ENCODE measurements at regions of chr2 and their contacts with region 1.

Region 1: DNA sequence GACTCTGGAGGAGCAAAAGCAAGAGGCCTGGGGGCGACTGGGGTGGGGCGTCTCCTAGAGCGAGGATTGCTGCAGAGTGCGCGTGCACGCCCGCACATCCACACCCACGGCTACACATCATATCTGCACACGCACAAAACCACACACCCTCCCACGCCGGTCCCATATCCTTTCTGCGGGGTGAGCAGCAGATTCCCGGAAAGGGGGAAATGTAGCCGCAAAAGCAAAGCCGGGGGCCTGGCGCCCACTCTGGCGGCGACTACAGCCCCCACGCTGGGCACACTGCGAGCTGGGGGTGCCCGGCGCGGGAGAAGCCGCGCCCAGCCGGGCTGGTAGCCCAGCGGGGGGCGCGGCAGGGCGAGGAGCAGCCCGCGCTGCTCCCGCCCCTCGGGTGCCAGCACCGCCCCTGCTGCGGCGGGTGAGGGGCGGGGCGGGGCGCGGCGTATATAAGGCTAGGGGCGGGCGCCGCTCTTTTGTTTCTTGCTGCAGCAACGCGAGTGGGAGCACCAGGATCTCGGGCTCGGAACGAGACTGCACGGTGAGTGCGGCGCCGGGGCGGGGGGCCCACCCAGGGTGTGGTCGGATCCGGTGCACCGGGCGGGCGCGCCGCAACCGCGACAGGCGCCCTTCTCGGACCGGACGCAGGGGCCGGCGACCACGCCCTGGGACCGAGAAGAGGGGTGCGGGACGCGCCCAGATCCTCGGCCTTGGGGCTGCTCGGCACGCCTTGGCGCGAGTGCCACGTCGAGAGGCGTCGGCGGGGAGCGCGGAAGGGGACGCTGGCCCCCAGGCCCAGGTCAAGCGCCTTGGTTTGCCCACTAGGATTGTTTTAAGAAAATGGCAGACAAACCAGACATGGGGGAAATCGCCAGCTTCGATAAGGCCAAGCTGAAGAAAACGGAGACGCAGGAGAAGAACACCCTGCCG is at the start of gene TMSB10:
- DNase-seq: no peak
- ATAC-seq: peak; percentile 81
- H3K4me3 ChIP-seq: peak within 1 kb of the TSS; percentile 99
- H3K27ac ChIP-seq: peak within 1 kb of the TSS; percentile 62
- H3K4me1 ChIP-seq: peaks cover 24% of the 10 kb centered on the region
- H3K27me3 ChIP-seq: no peaks in the 10 kb centered on the region
- CTCF ChIP-seq: peak in 2 of 3 experiments; percentile 25 to 33; a peak in 2 of 6 replicates
- EP300 ChIP-seq: no peak; a peak in 1 of 4 replicates
- POLR2A ChIP-seq: peak; percentile 99
- RAD21 ChIP-seq: no peak
- polyA plus RNA-seq, gene TMSB10: 2,817 to 3,116 TPM

Region 2: DNA sequence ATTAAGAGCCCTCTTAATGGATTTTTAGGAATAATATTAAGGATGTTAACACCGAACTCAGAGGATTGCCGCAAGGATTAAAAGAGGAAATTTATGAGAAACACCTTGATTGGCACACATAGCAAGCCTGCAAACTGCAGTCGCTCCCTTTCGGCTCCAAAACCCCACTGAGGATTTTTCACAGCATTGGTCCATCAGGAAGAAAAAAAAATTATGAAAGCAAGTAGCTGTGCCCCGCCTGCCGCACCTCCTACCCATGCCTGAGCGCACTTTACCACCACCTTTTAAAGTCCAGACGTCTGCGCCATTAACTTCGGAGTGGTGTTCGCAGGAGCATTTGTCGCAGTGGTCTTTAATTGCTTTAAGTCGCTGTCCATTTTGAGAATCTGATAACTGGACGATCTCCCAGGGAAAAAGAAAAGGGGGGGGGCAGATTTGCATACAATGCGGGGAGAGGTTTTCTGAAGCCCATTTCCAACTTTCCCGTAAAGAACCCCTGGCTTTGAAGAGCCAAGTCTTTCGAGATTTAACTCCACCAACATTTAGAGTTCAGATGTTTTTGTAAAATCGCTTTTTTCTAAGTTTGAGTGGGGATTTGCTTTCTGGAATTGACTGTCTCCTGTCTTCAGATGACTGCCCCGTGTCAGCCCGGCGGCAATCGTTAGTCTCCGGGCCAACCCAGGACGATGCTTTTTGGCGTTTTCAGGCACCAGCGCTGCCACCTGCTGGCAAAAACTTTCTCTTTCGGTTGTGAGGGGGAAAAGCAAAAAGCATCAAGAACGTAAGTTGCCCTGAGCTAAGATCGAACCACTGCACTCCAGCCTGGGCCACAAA is 23.6 kb before region 1 on chr2:
- CTCF ChIA-PET with region 1: interaction called, 18 read pairs
- POLR2A ChIA-PET with region 1: interaction called, 4 read pairs
- RAD21 ChIA-PET with region 1: interaction called, 44 read pairs
- SMC1A ChIA-PET with region 1: interaction called, 30 read pairs
- in situ Hi-C with region 1: no loop called
- intact Hi-C with region 1: loop called (anchors 1 kb)
- DNase-seq: no peak
- ATAC-seq: peak; percentile 71
- H3K4me3 ChIP-seq: peak overlapping the region; percentile 67
- H3K27ac ChIP-seq: no peak overlapping the region
- H3K4me1 ChIP-seq: peaks cover 16% of the 10 kb centered on the region
- H3K27me3 ChIP-seq: peaks cover 0 to 9% of the 10 kb centered on the region in 2 experiments; a peak in 3 of 4 replicates
- CTCF ChIP-seq: peak; percentile 59 to 76 (median 74)
- EP300 ChIP-seq: no peak
- POLR2A ChIP-seq: no peak
- RAD21 ChIP-seq: peak; percentile 66

Region 3: DNA sequence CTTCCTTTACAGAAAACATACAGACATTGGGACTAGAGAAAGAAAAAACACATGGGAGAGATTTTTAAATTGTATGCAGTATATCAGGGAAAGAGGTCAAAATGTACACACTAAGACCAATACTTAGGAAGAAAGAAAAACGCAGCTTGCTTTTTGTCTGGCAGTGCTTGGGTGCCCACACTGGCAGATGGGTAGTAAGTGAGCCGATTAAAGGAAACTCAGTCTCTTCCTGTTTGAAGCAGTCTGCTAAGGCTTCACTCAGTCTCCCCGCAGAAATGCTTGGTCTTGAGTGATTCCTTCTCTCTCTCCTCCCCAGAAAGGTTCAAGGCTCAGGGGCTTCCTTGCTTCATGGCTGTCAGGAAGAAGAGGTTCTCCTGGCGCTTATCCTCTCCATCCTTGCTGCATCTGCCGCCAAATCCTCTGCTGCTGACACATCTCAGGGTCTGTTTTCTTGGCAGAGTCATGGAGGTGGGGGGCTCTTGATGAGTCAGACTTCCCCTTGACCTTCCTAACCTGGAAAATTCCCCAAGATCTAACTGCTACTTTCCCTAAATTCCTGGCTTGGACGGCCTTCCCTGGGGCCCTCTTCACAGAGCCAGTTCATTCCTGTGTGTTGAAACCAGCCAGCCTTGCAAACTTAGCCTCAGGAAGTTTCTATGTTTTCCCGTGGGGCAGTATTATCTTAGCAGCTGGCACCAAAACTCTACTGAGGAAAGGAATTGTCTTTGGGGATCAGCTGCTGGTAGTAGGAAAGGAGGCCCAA is 10.5 kb before region 1 on chr2:
- CTCF ChIA-PET with region 1: interaction called, 13 read pairs
- POLR2A ChIA-PET with region 1: interaction called, 22 read pairs
- RAD21 ChIA-PET with region 1: interaction called, 44 read pairs
- SMC1A ChIA-PET with region 1: interaction called, 30 read pairs
- in situ Hi-C with region 1: no loop called
- intact Hi-C with region 1: no loop called
- DNase-seq: no peak
- ATAC-seq: peak; percentile 17
- H3K4me3 ChIP-seq: no peak overlapping the region
- H3K27ac ChIP-seq: peak overlapping the region; percentile 4; the same call in 1 of the 2 replicates
- H3K4me1 ChIP-seq: peaks cover 34% of the 10 kb centered on the region
- H3K27me3 ChIP-seq: no peaks in the 10 kb centered on the region
- CTCF ChIP-seq: no peak
- EP300 ChIP-seq: no peak
- POLR2A ChIP-seq: no peak
- RAD21 ChIP-seq: no peak

Region 4: DNA sequence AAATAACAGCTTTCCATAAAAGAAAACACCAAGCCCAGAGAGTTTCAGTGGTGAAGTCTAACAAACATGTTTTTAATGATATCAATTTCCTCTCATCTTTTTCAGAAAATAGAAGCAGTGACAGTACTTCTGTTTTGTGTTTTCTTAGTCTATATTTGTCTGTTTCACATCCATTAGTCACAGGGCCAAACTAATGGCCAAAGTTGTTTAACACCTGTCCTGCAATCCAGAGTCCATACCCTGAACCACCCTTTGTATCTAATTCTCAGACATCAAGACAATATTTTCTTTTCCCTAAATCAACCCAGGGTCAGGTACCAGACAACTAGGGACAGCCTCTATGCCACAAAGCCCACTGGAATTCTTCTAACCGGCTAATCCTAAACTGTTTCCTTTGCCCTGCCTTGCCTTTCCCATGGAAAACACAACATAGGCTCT is 26.0 kb after region 1 on chr2:
- CTCF ChIA-PET with region 1: interaction called, 37 read pairs
- POLR2A ChIA-PET with region 1: interaction called, 39 read pairs
- RAD21 ChIA-PET with region 1: interaction called, 67 read pairs
- SMC1A ChIA-PET with region 1: interaction called, 52 read pairs
- in situ Hi-C with region 1: no loop called
- intact Hi-C with region 1: no loop called
- DNase-seq: peak; percentile 71
- ATAC-seq: peak; percentile 71
- H3K4me3 ChIP-seq: peak overlapping the region; percentile 10; the same call in 1 of the 2 replicates
- H3K27ac ChIP-seq: peak overlapping the region; percentile 95
- H3K4me1 ChIP-seq: peaks cover 12% of the 10 kb centered on the region
- H3K27me3 ChIP-seq: no peaks in the 10 kb centered on the region
- CTCF ChIP-seq: no peak
- EP300 ChIP-seq: peak; percentile 63 to 71; a peak in 3 of 4 replicates
- POLR2A ChIP-seq: no peak
- RAD21 ChIP-seq: no peak

Region 5: DNA sequence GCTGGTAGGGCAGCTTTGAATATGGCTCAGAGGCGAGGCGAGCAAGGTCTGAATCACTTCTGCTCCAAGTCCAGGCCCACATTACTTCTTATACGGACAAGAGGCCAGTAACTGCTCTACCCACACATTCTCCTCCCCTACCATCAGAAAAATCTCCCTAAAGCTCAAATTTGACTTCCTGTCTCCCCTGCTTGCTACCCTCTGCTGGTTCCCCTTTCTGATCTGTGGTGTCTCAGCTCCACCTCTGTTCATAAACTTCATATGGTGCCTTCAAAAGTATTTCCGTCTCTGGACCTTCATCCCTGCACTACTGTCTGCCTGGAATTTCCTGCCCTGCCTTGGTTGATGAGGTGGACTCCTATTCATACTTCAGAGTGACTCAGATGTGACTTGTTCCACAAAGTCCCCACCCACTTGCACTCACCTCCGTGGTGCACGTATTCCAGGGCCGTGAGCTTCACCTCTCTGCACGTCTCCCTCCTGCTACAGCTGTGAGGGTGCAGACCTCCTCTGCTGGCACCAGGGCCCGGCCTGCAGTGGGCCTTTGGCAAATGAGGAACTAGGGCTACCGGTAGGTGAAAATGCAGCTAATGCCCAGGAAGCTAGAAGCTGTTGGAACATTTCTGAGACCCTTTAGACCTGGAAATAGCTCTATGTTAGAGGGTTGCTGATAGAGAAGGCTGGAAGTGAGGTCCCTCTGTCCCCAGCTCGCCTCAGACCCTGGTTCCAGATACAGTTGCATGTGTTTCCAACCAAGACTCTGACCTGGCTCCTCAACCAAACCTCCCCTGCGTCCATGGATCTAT is 41.0 kb after region 1 on chr2:
- CTCF ChIA-PET with region 1: interaction called, 4 read pairs
- POLR2A ChIA-PET with region 1: interaction called, 13 read pairs
- RAD21 ChIA-PET with region 1: interaction called, 9 read pairs
- SMC1A ChIA-PET with region 1: interaction called, 6 read pairs
- in situ Hi-C with region 1: no loop called
- intact Hi-C with region 1: no loop called
- DNase-seq: peak; percentile 93
- ATAC-seq: peak; percentile 72
- H3K4me3 ChIP-seq: peak overlapping the region; percentile 62
- H3K27ac ChIP-seq: peak overlapping the region; percentile 100
- H3K4me1 ChIP-seq: peaks cover 31% of the 10 kb centered on the region
- H3K27me3 ChIP-seq: no peaks in the 10 kb centered on the region
- CTCF ChIP-seq: peak in 2 of 3 experiments; percentile 31 to 39; a peak in 3 of 6 replicates
- EP300 ChIP-seq: peak; percentile 8 to 45; a peak in 1 of 4 replicates
- POLR2A ChIP-seq: peak; percentile 75
- RAD21 ChIP-seq: peak; percentile 54

Measured in GM12878 (cell line).